ENCODE measurements at regions of chr2 and their contacts with region 1.

Region 1: GRCh38 chr2:148614322-148615049 is 30.1 kb upstream of the EPC2 start:
- DNase-seq: no peak
- ATAC-seq: peak; percentile 70
- H3K4me3 ChIP-seq: no peak overlapping the region
- H3K4me3 Mint-ChIP-seq: peak overlapping the region in 1 of 10 donors; percentile 43
- H3K27ac ChIP-seq: no peak overlapping the region
- H3K27ac Mint-ChIP-seq: peak overlapping the region in 3 of 9 donors; percentile 7 to 73 (median 60)
- H3K4me1 ChIP-seq: no peaks in the 10 kb centered on the region
- H3K4me1 Mint-ChIP-seq: peaks cover 4 to 15% (median 7%) of the 10 kb centered on the region in 7 donors
- H3K27me3 ChIP-seq: no peaks in the 10 kb centered on the region
- H3K27me3 Mint-ChIP-seq: peaks cover 0 to 3% (median 0%) of the 10 kb centered on the region in 5 donors

Region 2: GRCh38 chr2:148603562-148603920 is 10.9 kb before region 1 on chr2:
- CTCF ChIA-PET with region 1: no interaction called
- POLR2A ChIA-PET with region 1: no interaction called
- intact Hi-C with region 1: loop called in 1 of 2 experiments (anchors 1 kb)
- DNase-seq: no peak
- ATAC-seq: no peak
- H3K4me3 ChIP-seq: no peak overlapping the region
- H3K4me3 Mint-ChIP-seq: peak overlapping the region in 1 of 10 donors; percentile 17
- H3K27ac ChIP-seq: no peak overlapping the region
- H3K27ac Mint-ChIP-seq: peak overlapping the region in 1 of 9 donors; percentile 56
- H3K4me1 ChIP-seq: no peaks in the 10 kb centered on the region
- H3K4me1 Mint-ChIP-seq: peaks cover 0 to 16% (median 2%) of the 10 kb centered on the region in 7 donors
- H3K27me3 ChIP-seq: no peaks in the 10 kb centered on the region
- H3K27me3 Mint-ChIP-seq: peaks cover 0 to 5% (median 0%) of the 10 kb centered on the region in 5 donors

Region 3: GRCh38 chr2:148720501-148721001 is 106.1 kb after region 1 on chr2:
- CTCF ChIA-PET with region 1: no interaction called
- POLR2A ChIA-PET with region 1: no interaction called
- intact Hi-C with region 1: no loop called
- DNase-seq: no peak
- ATAC-seq: no peak
- H3K4me3 ChIP-seq: no peak overlapping the region
- H3K4me3 Mint-ChIP-seq: peak overlapping the region in 9 of 10 donors; percentile 5 to 78 (median 30)
- H3K27ac ChIP-seq: no peak overlapping the region
- H3K27ac Mint-ChIP-seq: peak overlapping the region in 5 of 9 donors; percentile 1 to 60 (median 12)
- H3K4me1 ChIP-seq: peaks cover 21 to 28% of the 10 kb centered on the region in 2 donors
- H3K4me1 Mint-ChIP-seq: peaks cover 73 to 97% (median 90%) of the 10 kb centered on the region in 7 donors
- H3K27me3 ChIP-seq: no peaks in the 10 kb centered on the region
- H3K27me3 Mint-ChIP-seq: no peaks in the 10 kb centered on the region

Region 4: DNA sequence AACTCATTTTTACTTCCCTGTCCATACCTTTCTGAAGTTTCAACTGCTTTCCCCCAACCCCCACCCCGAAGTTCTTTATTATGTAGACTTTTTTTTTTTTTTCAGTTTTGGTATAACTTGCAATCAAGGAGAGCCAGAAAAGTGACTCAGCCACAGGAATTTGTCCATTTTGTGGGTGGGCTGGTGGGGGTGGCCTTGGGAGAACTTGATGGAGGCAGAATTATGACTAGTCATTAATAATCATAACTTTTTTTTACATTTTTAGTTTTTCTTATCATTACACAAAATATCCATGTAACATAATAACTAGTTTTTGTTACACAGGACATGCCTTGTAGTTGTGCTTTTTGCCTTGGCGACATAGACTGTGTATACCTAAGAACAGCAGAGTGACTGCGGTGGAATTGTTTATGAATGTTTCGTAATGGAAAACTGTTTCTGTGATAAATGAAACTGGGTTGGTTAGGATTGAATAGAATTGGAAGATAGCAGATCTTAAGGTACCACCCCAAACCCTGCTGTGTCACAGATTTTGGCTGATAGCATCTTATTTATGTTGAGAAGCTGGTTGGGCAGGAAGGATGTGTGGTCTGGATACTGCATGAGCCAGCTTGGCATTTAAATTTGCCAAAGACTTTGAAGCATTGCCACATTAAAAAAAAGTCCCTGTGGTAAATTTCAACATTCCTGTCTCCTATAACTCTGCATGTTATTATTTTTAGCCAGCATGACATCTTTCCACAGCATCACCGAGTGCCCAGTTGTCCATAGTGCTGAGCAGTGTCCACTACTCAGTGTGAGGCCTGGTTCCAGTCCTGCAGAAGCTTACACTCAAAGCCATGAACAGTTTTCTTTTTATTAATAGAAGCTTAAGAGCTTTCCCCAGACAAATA is 454.8 kb after region 1 on chr2:
- CTCF ChIA-PET with region 1: no interaction called
- POLR2A ChIA-PET with region 1: no interaction called
- intact Hi-C with region 1: no loop called
- DNase-seq: no peak
- ATAC-seq: peak; percentile 93
- H3K4me3 ChIP-seq: no peak overlapping the region
- H3K4me3 Mint-ChIP-seq: peak overlapping the region in 1 of 10 donors; percentile 18
- H3K27ac ChIP-seq: no peak overlapping the region
- H3K27ac Mint-ChIP-seq: peak overlapping the region in 1 of 9 donors; percentile 36
- H3K4me1 ChIP-seq: no peaks in the 10 kb centered on the region
- H3K4me1 Mint-ChIP-seq: peaks cover 7 to 18% (median 12%) of the 10 kb centered on the region in 7 donors
- H3K27me3 ChIP-seq: no peaks in the 10 kb centered on the region
- H3K27me3 Mint-ChIP-seq: peaks cover 20 to 50% (median 31%) of the 10 kb centered on the region in 5 donors

Measured in naive thymus-derived CD4-positive, alpha-beta T cell (primary cell).